Astrocyte of the cerebellum (primary cell): ENCODE measurements at regions of chr4 and their contacts with region 1.

Region 1: GRCh38 chr4:168710353-168710946 is 213.6 kb downstream of the PALLD start:
- DNase-seq: peak; percentile 63
- H3K4me3 ChIP-seq: no peak overlapping the region
- CTCF ChIP-seq: peak; percentile 66

Region 2: DNA sequence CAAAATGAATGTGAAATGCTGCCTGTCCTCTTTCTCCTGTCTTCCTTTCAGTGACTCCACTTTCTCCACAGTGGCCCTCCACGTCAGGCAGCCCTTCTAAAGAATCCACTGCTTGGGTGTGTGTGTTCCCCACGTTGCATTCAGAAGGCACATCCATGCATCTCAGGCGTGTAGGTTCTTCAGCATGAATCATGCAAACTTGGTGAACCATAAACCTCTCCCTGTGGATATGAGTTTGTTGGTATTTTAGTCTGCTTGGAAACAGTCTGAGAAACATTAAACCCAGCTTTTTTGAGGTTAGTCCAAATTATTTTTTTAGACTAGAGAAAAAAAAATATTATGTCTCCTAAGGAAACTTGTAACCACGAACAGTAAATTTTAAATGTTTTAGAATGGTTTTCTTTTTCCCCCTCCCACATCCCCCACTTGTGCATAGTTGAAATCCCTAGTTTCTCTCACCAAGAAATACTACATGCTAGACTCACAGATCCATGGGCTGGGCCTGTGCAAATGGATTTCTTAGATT is 48.0 kb after region 1 on chr4:
- in situ Hi-C with region 1: no loop called
- DNase-seq: peak; percentile 92
- H3K4me3 ChIP-seq: no peak overlapping the region
- CTCF ChIP-seq: no peak

Region 3: GRCh38 chr4:168784786-168785461 is 74.5 kb after region 1 on chr4:
- in situ Hi-C with region 1: loop called (anchors 5 kb)
- DNase-seq: peak; percentile 76
- H3K4me3 ChIP-seq: no peak overlapping the region
- CTCF ChIP-seq: no peak

Region 4: DNA sequence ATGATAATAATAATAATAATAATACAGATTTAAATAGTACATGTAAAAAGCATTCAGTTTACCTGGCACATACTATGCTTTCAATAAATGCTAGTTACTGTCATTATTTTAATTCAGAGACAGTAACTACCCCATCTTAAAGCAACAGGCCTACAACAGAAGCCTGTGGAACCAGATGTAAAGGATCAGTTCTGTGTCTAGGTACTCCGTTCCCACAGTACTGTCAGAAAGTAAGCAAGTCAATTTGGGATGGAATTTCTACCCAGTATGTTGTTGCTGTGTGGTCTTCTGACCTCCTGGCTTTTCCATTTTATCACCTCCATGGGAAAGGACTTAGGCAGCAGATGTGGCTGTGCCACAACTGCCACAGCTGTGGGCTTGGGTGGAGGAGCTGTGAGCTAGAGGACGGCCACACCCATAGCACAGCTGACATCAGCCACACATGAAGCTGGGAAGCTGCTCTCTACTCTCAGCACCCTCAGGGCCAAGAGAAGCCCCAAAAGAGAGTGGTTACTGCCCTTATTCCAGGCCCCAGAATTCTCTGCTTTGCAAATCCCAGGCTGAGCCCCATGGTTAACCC is 196.8 kb after region 1 on chr4:
- in situ Hi-C with region 1: loop called (anchors 10 kb)
- DNase-seq: no peak
- H3K4me3 ChIP-seq: no peak overlapping the region
- CTCF ChIP-seq: no peak